ENCODE measurements at regions of chr2 and their contacts with region 1.

Region 1: GRCh38 chr2:237966565-237967462 is at the start of gene UBE2F:
- DNase-seq: peak; percentile 97 to 98 (median 98)
- H3K4me3 ChIP-seq: peak within 1 kb of the TSS; percentile 69 to 89 (median 79)
- H3K27ac ChIP-seq: peak within 1 kb of the TSS in 1 of 2 experiments; percentile 66
- H3K4me1 ChIP-seq: peaks cover 26 to 53% (median 47%) of the 10 kb centered on the region in 4 experiments
- H3K27me3 ChIP-seq: no peaks in the 10 kb centered on the region

Region 2: DNA sequence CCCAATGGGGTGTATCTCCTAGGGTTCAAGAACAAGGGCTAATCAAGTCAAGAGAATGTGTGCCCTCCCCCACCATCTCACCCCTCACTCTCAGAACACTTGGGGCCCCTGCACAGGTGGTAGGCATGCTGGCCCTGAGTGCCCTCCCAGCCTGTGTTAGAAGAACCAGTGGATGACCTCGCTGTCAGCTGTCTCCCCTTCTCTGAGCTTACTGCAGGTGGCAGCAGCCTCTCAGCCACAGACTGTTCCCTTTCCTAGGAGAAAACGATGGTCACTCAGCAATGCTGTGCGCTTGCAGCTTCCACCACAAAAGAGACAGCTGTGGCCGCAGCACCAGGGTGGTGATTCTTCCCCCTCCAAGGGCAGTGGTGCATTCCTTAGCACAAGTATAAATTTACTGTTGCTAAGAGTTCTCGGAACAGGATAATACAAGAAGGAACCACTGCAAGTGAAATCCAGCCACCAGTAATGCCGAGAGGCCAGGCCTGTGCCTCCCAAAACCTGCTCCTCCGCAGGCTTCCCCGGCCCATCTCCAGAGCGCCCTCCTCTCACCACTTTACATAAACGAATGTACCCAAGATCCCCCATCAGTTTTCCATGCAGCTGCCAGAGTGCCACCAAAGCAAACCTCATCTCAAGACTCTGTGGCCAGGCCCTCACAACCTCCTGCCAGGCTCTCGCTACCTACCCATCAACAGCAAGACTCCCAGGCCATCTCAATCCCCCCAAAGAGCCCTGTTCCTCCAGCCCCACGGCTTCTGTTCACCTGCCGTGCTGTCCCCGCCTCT is 108.3 kb before region 1 on chr2:
- CTCF ChIA-PET with region 1: interaction called, 11 read pairs
- POLR2A ChIA-PET with region 1: no interaction called
- DNase-seq: peak; percentile 70 to 81 (median 76)
- H3K4me3 ChIP-seq: peak overlapping the region in 2 of 7 experiments; percentile 75 to 76
- H3K27ac ChIP-seq: no peak overlapping the region
- H3K4me1 ChIP-seq: peaks cover 5 to 38% (median 22%) of the 10 kb centered on the region in 4 experiments
- H3K27me3 ChIP-seq: peaks cover 0 to 20% (median 11%) of the 10 kb centered on the region in 5 experiments

Region 3: GRCh38 chr2:237923481-237924163 is 43.2 kb before region 1 on chr2:
- CTCF ChIA-PET with region 1: interaction called, 21 read pairs
- POLR2A ChIA-PET with region 1: interaction called, 3 read pairs
- DNase-seq: peak; percentile 61 to 78 (median 76)
- H3K4me3 ChIP-seq: peak overlapping the region in 6 of 7 experiments; percentile 35 to 79 (median 56)
- H3K27ac ChIP-seq: no peak overlapping the region
- H3K4me1 ChIP-seq: peaks cover 4 to 37% (median 30%) of the 10 kb centered on the region in 4 experiments
- H3K27me3 ChIP-seq: no peaks in the 10 kb centered on the region

Region 4: DNA sequence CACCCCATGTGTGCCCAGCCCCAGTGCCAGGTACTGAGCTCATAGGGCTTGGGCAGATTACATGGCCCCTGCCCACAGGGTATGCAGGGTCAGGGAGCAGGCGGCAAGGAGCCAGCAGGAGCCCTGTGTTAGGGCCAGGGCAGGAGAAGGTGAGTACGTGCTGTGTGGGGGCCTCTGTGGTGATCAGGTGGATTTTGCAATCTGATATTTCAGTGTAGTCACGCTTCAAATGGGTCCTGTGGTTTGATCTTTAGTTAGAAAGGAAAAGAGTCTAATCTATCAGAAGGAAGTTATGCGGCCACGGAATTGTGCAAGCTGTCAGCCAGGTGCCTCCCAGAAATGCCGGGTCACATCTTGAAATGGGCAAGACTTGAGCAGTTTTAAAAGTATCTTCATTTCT is 13.9 kb after region 1 on chr2:
- CTCF ChIA-PET with region 1: interaction called, 22 read pairs
- POLR2A ChIA-PET with region 1: interaction called, 4 read pairs
- DNase-seq: peak; percentile 72 to 87 (median 84)
- H3K4me3 ChIP-seq: peak overlapping the region in 4 of 7 experiments; percentile 8 to 44 (median 28)
- H3K27ac ChIP-seq: no peak overlapping the region
- H3K4me1 ChIP-seq: peaks cover 16 to 70% (median 42%) of the 10 kb centered on the region in 4 experiments
- H3K27me3 ChIP-seq: no peaks in the 10 kb centered on the region

Measured in common myeloid progenitor, CD34-positive (primary cell).